ENCODE measurements at regions of chr10 and their contacts with region 1.

Region 1: GRCh38 chr10:33008499-33009243 is 50.6 kb upstream of the ITGB1 start:
- DNase-seq: peak; percentile 71
- ATAC-seq: peak; percentile 42
- H3K4me3 ChIP-seq: peak overlapping the region in 3 of 5 experiments; percentile 18 to 36 (median 22)
- H3K4me3 Mint-ChIP-seq: peak overlapping the region; percentile 59
- H3K27ac ChIP-seq: peak overlapping the region in 1 of 2 donors; percentile 5
- H3K27ac Mint-ChIP-seq: no peak overlapping the region
- H3K4me1 ChIP-seq: peaks cover 20 to 47% of the 10 kb centered on the region in 2 donors
- H3K4me1 Mint-ChIP-seq: peaks cover 45% of the 10 kb centered on the region
- H3K27me3 ChIP-seq: peaks cover 0 to 6% (median 0%) of the 10 kb centered on the region in 4 experiments
- H3K27me3 Mint-ChIP-seq: peaks cover 8% of the 10 kb centered on the region
- CTCF ChIP-seq: peak; percentile 99

Region 2: GRCh38 chr10:32256613-32257437 is 751.8 kb before region 1 on chr10:
- CTCF ChIA-PET with region 1: interaction called, 3 read pairs
- POLR2A ChIA-PET with region 1: no interaction called
- intact Hi-C with region 1: loop called (anchors 2 kb)
- DNase-seq: peak; percentile 81
- ATAC-seq: peak; percentile 92
- H3K4me3 ChIP-seq: no peak overlapping the region
- H3K4me3 Mint-ChIP-seq: peak overlapping the region; percentile 16
- H3K27ac ChIP-seq: no peak overlapping the region
- H3K27ac Mint-ChIP-seq: no peak overlapping the region
- H3K4me1 ChIP-seq: peaks cover 3 to 7% of the 10 kb centered on the region in 2 donors
- H3K4me1 Mint-ChIP-seq: peaks cover 6% of the 10 kb centered on the region
- H3K27me3 ChIP-seq: no peaks in the 10 kb centered on the region
- H3K27me3 Mint-ChIP-seq: no peaks in the 10 kb centered on the region
- CTCF ChIP-seq: peak; percentile 93

Region 3: DNA sequence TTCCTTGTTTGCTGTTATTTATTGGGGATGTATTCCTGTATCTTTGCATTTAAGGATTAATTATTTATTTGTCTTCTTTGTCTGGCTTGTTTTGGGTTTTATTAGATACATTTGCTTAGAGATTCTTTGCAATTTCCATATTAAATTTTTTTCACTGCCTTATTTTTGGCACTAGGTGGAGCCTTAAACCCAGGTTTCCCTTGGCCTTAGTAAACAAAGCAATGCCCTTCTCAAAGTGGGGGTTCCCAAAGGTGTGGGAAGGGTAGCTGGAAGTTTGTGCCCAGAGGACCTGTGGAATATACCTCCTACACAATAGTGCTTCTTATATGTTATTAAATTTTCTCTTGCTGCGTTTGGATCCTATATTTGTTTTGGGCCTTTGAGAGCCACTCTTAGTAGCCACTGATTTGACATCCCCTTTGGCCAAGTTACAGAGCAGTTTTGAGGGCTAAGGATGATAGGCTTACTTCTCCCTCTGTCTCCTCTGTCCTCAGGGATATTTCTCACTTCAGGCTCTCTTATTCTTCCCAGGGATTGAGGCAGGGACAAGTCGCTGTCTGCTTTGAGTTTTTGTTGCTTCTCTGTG is 213.0 kb before region 1 on chr10:
- CTCF ChIA-PET with region 1: interaction called, 33 read pairs
- POLR2A ChIA-PET with region 1: no interaction called
- intact Hi-C with region 1: loop called (anchors 1 kb)
- DNase-seq: peak; percentile 57
- ATAC-seq: no peak
- H3K4me3 ChIP-seq: no peak overlapping the region
- H3K4me3 Mint-ChIP-seq: no peak overlapping the region
- H3K27ac ChIP-seq: no peak overlapping the region
- H3K27ac Mint-ChIP-seq: no peak overlapping the region
- H3K4me1 ChIP-seq: no peaks in the 10 kb centered on the region
- H3K4me1 Mint-ChIP-seq: no peaks in the 10 kb centered on the region
- H3K27me3 ChIP-seq: no peaks in the 10 kb centered on the region
- H3K27me3 Mint-ChIP-seq: no peaks in the 10 kb centered on the region
- CTCF ChIP-seq: peak; percentile 78

Region 4: DNA sequence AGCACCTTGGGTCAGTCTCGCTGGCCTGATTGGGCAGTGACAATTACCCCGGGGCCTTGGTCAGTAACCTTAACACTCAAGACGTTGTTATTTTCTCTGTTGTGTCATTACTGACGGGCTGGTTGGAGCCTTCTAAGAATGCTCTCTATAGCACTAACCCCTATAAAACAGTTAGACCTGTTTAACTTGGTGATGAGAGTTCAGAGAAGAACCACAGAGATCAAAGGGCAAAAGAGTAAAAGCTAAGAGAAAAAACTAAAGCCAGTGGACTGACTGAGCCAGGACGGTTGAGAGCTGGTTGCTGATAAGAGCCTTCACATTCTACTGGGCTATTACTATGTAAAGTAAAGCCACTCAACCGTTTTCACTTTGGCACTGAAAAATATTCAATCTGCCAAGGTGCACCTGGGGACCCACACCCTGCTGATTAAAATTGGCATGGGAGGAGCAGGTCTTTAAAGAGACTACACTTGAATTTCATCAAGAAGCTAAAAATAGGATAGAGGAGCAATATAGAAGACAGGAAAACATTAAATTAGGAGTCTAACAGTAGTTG is 37.1 kb before region 1 on chr10:
- CTCF ChIA-PET with region 1: interaction called, 10 read pairs
- POLR2A ChIA-PET with region 1: no interaction called
- intact Hi-C with region 1: no loop called
- DNase-seq: no peak
- ATAC-seq: peak; percentile 49
- H3K4me3 ChIP-seq: peak overlapping the region in 1 of 5 experiments; percentile 15
- H3K4me3 Mint-ChIP-seq: peak overlapping the region; percentile 86
- H3K27ac ChIP-seq: peak overlapping the region; percentile 22 to 53
- H3K27ac Mint-ChIP-seq: peak overlapping the region; percentile 92
- H3K4me1 ChIP-seq: peaks cover 0 to 23% of the 10 kb centered on the region in 2 donors
- H3K4me1 Mint-ChIP-seq: peaks cover 30% of the 10 kb centered on the region
- H3K27me3 ChIP-seq: peaks cover 0 to 2% (median 0%) of the 10 kb centered on the region in 4 experiments
- H3K27me3 Mint-ChIP-seq: no peaks in the 10 kb centered on the region
- CTCF ChIP-seq: no peak

Region 5: GRCh38 chr10:32995751-32996150 is 12.9 kb before region 1 on chr10:
- CTCF ChIA-PET with region 1: interaction called, 19 read pairs
- POLR2A ChIA-PET with region 1: no interaction called
- intact Hi-C with region 1: no loop called
- DNase-seq: peak; percentile 25
- ATAC-seq: peak; percentile 65
- H3K4me3 ChIP-seq: peak overlapping the region in 1 of 5 experiments; percentile 16
- H3K4me3 Mint-ChIP-seq: peak overlapping the region; percentile 7
- H3K27ac ChIP-seq: peak overlapping the region; percentile 22 to 60
- H3K27ac Mint-ChIP-seq: peak overlapping the region; percentile 64
- H3K4me1 ChIP-seq: peaks cover 8 to 10% of the 10 kb centered on the region in 2 donors
- H3K4me1 Mint-ChIP-seq: peaks cover 25% of the 10 kb centered on the region
- H3K27me3 ChIP-seq: no peaks in the 10 kb centered on the region
- H3K27me3 Mint-ChIP-seq: no peaks in the 10 kb centered on the region
- CTCF ChIP-seq: no peak

Region 6: GRCh38 chr10:33115738-33116719 is 107.4 kb after region 1 on chr10:
- CTCF ChIA-PET with region 1: interaction called, 20 read pairs
- POLR2A ChIA-PET with region 1: no interaction called
- intact Hi-C with region 1: no loop called
- DNase-seq: no peak
- ATAC-seq: no peak
- H3K4me3 ChIP-seq: no peak overlapping the region
- H3K4me3 Mint-ChIP-seq: no peak overlapping the region
- H3K27ac ChIP-seq: peak overlapping the region; percentile 39 to 54
- H3K27ac Mint-ChIP-seq: peak overlapping the region; percentile 92
- H3K4me1 ChIP-seq: peaks cover 42 to 76% of the 10 kb centered on the region in 2 donors
- H3K4me1 Mint-ChIP-seq: peaks cover 78% of the 10 kb centered on the region
- H3K27me3 ChIP-seq: no peaks in the 10 kb centered on the region
- H3K27me3 Mint-ChIP-seq: no peaks in the 10 kb centered on the region
- CTCF ChIP-seq: no peak

Region 7: DNA sequence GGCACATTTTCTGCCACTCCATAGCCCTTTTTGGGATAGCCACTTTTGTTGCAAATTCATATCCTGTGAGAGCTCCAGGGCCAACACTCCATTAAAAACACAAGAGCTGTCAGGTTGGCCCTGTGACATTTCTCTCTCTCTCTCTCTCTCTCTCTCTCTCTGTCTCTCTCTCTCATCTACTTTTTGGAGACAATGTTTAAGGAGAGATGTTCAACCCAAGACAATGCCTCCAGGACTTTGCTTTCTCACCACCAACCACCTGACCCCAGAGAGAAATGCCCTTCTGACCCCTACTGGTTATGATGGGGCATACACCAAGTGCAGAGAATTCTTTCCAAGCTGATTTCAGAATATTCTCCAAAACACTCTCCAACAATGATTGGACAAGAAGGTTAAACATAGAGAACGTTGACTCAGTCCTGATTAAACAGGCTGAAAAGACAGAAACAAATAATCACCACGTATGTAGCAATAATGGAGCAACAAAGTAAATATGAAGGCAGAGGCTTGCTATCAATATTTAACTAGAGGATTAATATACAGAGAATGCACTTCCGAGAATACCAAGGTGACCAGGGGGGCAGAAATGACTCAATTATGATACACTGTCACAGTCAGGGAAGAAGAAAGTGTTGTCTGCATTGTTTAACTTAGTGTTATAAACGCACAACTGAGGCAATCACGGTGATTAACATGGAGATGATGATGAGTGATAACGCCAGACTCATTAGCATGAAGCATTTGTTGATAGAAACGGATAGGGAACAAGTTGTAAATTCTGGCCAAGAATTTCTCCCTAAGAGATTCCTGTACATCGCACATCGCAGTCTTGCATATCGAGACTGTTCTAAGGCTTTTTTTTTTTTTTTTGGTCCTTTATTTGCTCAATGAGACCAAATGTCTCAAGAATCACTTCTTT is 147.3 kb after region 1 on chr10:
- CTCF ChIA-PET with region 1: interaction called, 43 read pairs
- POLR2A ChIA-PET with region 1: interaction called, 4 read pairs
- intact Hi-C with region 1: loop called (anchors 2 kb)
- DNase-seq: peak; percentile 61
- ATAC-seq: peak; percentile 65
- H3K4me3 ChIP-seq: no peak overlapping the region
- H3K4me3 Mint-ChIP-seq: no peak overlapping the region
- H3K27ac ChIP-seq: no peak overlapping the region
- H3K27ac Mint-ChIP-seq: peak overlapping the region; percentile 5
- H3K4me1 ChIP-seq: peaks cover 10 to 43% of the 10 kb centered on the region in 2 donors
- H3K4me1 Mint-ChIP-seq: peaks cover 32% of the 10 kb centered on the region
- H3K27me3 ChIP-seq: no peaks in the 10 kb centered on the region
- H3K27me3 Mint-ChIP-seq: peaks cover 4% of the 10 kb centered on the region
- CTCF ChIP-seq: peak; percentile 69

Measured in B cell (primary cell).